Left ventricle myocardium superior (tissue), 1 donor: ENCODE measurements at regions of chr1 and their contacts with region 1.

Region 1: DNA sequence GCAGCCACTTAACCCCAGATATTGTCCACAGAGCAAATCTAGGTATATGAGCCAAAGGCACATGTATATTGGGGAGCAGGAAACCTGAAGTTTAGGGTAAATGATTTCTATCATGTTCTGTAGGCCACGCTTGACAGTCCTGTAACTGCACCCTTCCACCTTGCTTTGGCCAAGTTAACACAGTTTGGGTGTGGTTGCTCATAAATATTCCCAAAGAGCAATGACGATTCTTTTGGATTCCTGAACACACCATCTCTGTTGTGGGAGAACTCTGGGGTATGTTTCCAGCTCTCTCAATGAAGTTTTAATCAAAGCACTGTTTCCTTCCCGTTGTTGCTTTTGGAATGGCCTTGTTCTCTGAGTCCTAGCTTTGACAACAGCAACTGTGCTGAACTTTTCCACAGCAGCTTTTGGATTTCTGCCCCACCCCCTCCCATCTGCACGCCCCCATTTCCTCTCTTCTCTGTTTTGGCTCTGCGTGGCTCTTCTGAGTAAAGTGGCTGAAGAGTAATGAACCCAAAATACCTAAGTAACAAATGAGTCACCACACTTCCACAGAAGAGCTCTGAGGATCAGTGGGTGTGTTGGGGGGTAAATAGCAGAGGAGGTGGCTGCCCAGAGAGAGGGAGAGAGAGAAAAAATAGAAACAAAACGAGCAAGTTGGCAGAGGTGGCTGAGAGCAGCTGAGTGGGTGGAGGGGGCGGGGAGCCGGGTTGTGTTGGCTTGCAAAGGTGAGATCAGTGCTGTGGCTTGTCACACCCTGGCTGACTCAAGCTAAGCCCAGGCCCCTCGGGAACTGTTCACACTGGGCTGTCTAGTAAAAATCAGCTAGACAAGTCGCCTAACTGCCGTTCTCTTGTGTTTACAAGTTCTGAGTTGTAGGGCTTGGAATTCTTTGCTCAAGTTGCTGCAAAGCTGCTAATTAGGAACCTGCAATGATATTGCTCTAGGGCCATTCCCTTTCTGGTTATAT is 26.9 kb upstream of the RAP1A start:
- DNase-seq: peak; percentile 91
- ATAC-seq: peak; percentile 93

Region 2: GRCh38 chr1:111516005-111516535 is 76.6 kb before region 1 on chr1:
- intact Hi-C with region 1: loop called (anchors 5 kb)
- DNase-seq: peak; percentile 69
- ATAC-seq: peak; percentile 65